ENCODE measurements at regions of chr10 and their contacts with region 1.

Region 1: GRCh38 chr10:114374053-114374791 is 30.1 kb downstream of the AFAP1L2 start:
- DNase-seq: no peak
- ATAC-seq: peak; percentile 41 to 44; a peak in 4 of 6 replicates
- H3K4me3 ChIP-seq: no peak overlapping the region
- H3K27ac ChIP-seq: peak overlapping the region; percentile 34 to 76; a peak in 4 of 6 replicates
- H3K4me1 ChIP-seq: peaks cover 60% of the 10 kb centered on the region
- CTCF ChIP-seq: no peak
- EP300 ChIP-seq: no peak
- POLR2A ChIP-seq: no peak
- RAD21 ChIP-seq: no peak

Region 2: DNA sequence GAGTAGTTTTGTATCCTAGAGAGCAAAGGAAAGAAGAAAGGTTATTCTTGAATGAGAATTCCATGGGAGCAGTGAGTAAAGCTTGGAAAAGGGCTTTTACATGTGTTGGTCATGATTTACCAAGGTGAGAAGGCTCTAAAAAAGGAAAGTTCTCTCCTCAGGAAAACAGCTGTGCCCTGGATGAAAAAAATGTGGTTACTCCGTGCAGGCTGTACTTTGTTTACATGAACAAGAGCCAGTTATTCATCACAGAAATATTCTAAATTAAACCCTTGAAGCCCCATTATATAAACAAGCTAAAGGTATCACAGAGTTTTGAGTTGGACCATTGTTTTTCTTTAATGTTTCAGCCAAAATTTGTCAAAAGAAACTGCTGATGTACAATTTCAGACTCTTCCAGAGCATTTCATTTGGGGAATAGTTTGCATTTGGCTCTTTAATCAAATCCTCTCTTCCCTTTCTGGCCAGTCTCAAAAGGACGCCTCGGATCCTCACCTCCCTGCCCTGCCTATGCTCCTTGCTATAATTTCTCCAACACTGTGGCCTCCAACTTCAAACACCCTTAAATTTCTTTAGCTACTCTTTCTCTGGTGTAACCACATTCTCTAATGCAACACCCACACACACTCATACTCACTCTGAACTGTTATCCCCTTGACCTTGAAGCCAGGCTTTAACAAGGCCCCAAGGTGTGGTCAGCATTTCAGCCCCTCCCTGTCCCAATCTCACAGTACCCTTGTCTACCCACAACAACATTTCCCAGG is 17.3 kb before region 1 on chr10:
- CTCF ChIA-PET with region 1: no interaction called
- POLR2A ChIA-PET with region 1: no interaction called
- DNase-seq: no peak
- ATAC-seq: peak in 1 of 2 experiments; percentile 32; a peak in 2 of 6 replicates
- H3K4me3 ChIP-seq: no peak overlapping the region
- H3K27ac ChIP-seq: peak overlapping the region; percentile 25 to 56; a peak in 4 of 6 replicates
- H3K4me1 ChIP-seq: peaks cover 48% of the 10 kb centered on the region
- CTCF ChIP-seq: no peak
- EP300 ChIP-seq: no peak
- POLR2A ChIP-seq: no peak
- RAD21 ChIP-seq: no peak

Region 3: DNA sequence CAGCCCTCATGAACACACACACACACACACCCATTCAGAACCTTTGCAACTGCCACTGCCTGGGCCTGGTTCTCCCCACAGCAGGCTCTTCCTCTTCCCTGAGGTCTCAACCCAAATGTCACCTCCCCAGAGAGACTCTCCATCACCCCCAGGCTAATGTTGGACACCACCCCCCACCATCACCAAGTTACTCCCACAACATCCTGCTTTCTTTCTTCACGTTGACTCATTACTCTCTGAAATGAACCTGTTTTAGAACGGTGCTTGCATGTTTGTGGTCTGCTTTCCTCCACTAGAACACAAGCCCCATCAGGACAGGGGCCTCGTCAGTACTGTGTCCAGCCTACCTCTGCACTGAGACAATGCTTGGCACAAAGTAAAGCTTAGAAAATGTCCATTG is 14.1 kb after region 1 on chr10:
- CTCF ChIA-PET with region 1: interaction called, 31 read pairs
- POLR2A ChIA-PET with region 1: no interaction called
- DNase-seq: no peak
- ATAC-seq: no peak
- H3K4me3 ChIP-seq: no peak overlapping the region
- H3K27ac ChIP-seq: peak overlapping the region; percentile 39 to 75; a peak in 4 of 6 replicates
- H3K4me1 ChIP-seq: peaks cover 53% of the 10 kb centered on the region
- CTCF ChIP-seq: no peak
- EP300 ChIP-seq: no peak
- POLR2A ChIP-seq: no peak
- RAD21 ChIP-seq: no peak

Measured in A549 (cell line).